H1 (cell line): ENCODE measurements at regions of chr15 and their contacts with region 1.

Region 1: DNA sequence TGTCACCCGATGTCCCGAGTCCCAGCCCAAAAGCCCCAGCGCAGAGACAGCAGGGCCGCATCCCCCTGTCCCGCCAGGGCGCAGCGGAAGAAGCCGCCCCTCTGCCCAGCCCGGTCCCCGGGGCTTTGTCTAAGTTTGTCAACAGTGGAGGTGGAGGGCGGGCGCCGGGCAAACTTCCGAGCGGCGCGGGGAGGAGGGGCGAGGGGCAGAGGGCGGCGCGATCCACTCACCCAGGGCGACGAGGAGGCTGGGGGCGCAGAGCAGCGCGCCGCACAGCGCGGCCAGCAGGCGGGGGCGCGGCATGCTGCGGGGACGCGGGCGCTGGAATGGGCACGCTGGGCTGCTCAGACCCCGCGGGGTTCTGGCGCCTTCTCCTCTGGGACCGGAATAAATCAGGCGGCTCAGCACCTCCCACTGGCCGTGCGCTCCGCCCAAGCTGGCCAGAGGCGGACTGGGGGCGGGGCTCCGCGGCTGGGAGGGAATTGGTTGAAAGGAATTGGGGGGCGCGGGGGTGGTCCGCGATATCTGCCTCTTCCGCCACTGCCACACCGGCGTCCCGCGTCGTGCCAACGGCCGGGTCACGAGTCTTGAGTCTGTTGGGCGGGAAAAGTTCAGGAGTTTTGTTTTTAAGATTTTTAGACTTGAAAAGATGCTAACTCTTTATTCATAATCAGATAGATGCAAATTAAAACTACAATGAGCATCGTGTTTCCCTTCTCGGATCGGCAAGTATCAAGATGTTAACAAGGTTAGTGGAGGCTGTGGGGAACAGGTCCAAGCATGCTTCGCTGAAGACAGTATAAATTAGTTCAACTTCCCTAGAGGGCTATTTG is at the start of gene MFGE8:
- DNase-seq: peak; percentile 71 to 96
- H3K4me3 ChIP-seq: peak within 1 kb of the TSS; percentile 74 to 90 (median 84)
- H3K27ac ChIP-seq: peak within 1 kb of the TSS; percentile 22; the same call in 1 of the 2 replicates
- H3K4me1 ChIP-seq: peaks cover 2 to 26% (median 23%) of the 10 kb centered on the region in 4 experiments
- H3K27me3 ChIP-seq: no peaks in the 10 kb centered on the region; a peak in 1 of 7 replicates
- CTCF ChIP-seq: peak; percentile 5 to 21 (median 13); a peak in 3 of 4 replicates
- EP300 ChIP-seq: 0 out of 3 replicates have a peak, but pooled peaks of 1 of the 2 experiments have one; percentile 12
- POLR2A ChIP-seq: peak; percentile 78 to 93
- RAD21 ChIP-seq: peak; percentile 27 to 48; a peak in 3 of 4 replicates
- total RNA-seq, gene MFGE8: 1,211 and 1,237 TPM in 2 replicates

Region 2: GRCh38 chr15:88756921-88757320 is 156.3 kb before region 1 on chr15:
- CTCF ChIA-PET with region 1: no interaction called
- POLR2A ChIA-PET with region 1: no interaction called
- DNase-seq: no peak
- H3K4me3 ChIP-seq: no peak overlapping the region
- H3K27ac ChIP-seq: no peak overlapping the region
- H3K4me1 ChIP-seq: no peaks in the 10 kb centered on the region
- H3K27me3 ChIP-seq: no peaks in the 10 kb centered on the region; a peak in 1 of 7 replicates
- CTCF ChIP-seq: no peak
- EP300 ChIP-seq: no peak
- POLR2A ChIP-seq: no peak
- RAD21 ChIP-seq: no peak

Region 3: DNA sequence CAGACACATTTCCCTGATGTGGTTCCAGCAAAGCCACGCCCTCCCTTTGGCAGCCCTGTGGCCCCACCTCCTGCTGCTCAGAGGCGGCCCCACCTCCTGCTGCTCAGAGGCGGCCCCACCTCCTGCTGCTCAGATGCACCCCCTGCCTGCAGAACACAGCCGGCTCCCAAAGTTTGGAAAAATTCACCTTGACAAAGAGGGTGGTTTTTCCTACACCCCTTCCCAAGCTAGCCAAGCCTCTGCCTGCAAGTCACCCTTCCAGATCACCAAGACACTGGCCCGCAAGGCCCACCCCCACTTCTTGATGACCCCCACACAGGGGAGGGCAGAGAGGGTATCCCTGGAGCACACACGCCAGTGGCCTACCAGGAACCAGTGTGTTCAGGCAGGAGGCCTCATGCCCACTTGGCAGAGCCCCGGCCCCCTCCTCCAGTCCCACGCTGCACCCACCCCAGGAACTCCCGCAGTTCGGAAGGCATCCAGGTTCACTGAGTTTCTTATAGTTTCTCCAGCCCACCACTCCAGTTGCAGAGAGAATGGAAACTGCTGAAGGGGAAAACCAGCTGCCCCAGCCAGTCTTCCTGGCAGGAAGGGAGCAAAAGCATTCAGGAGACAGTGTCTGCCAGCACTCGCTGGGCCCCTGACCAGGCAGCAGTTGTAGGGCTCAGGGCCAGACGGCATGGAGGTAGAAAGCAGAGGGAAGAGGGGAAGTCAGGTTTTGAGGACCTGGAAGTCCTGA is 15.6 kb before region 1 on chr15:
- CTCF ChIA-PET with region 1: interaction called, 30 read pairs
- POLR2A ChIA-PET with region 1: interaction called, 361 read pairs
- DNase-seq: peak in 1 of 2 experiments; percentile 63
- H3K4me3 ChIP-seq: no peak overlapping the region; a peak in 2 of 8 replicates
- H3K27ac ChIP-seq: no peak overlapping the region
- H3K4me1 ChIP-seq: peaks cover 0 to 37% (median 22%) of the 10 kb centered on the region in 4 experiments; a peak in 6 of 7 replicates
- H3K27me3 ChIP-seq: no peaks in the 10 kb centered on the region
- CTCF ChIP-seq: peak in 1 of 3 experiments; percentile 12; a peak in 1 of 4 replicates
- EP300 ChIP-seq: no peak
- POLR2A ChIP-seq: peak in 1 of 2 experiments; percentile 60; a peak in 1 of 3 replicates
- RAD21 ChIP-seq: no peak

Region 4: DNA sequence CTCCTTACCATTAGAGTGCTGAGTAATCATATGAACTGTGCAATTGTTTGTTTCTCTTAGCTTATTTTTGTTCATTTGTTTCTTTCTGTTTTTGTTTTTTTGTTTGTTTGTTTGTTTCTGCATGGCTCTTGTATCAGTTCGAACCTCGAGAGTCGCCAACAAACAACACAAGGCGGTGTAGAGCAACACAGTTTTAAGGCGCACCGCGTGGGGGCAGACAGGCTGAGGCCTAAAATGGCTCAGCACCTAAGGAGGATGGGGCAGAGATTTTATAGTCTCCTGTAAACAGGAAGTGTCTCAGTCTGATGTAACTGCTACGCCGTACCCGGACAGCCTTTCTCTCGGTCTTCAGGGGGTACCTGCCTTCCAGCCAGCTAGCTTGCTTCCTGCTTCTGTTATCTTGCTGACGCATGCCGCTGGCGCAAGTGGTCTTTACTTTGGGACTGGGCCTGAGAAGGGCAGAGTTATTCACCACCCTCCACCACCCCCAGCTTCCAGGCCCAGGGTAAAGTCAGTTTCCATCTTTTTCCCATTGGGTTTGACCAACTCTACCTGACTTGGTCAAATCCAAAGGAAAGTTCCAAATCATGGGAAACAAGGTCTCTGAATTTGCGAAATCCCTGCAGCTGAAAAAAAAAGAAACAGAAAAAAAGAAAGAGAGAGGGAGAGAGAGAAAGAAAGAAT is 25.7 kb after region 1 on chr15:
- CTCF ChIA-PET with region 1: interaction called, 4 read pairs
- POLR2A ChIA-PET with region 1: interaction called, 12 read pairs
- DNase-seq: peak in 1 of 2 experiments; percentile 52
- H3K4me3 ChIP-seq: no peak overlapping the region
- H3K27ac ChIP-seq: no peak overlapping the region
- H3K4me1 ChIP-seq: peaks cover 0 to 7% (median 2%) of the 10 kb centered on the region in 4 experiments; a peak in 4 of 7 replicates
- H3K27me3 ChIP-seq: no peaks in the 10 kb centered on the region
- CTCF ChIP-seq: no peak
- EP300 ChIP-seq: no peak
- POLR2A ChIP-seq: no peak
- RAD21 ChIP-seq: peak; percentile 5 to 45; a peak in 2 of 4 replicates

Region 5: GRCh38 chr15:88974392-88974791 is 61.2 kb after region 1 on chr15:
- CTCF ChIA-PET with region 1: interaction called, 5 read pairs
- POLR2A ChIA-PET with region 1: interaction called, 10 read pairs
- DNase-seq: no peak
- H3K4me3 ChIP-seq: no peak overlapping the region
- H3K27ac ChIP-seq: no peak overlapping the region
- H3K4me1 ChIP-seq: peaks cover 0 to 4% (median 3%) of the 10 kb centered on the region in 4 experiments; a peak in 5 of 7 replicates
- H3K27me3 ChIP-seq: no peaks in the 10 kb centered on the region
- CTCF ChIP-seq: no peak
- EP300 ChIP-seq: no peak
- POLR2A ChIP-seq: no peak
- RAD21 ChIP-seq: no peak

Region 6: DNA sequence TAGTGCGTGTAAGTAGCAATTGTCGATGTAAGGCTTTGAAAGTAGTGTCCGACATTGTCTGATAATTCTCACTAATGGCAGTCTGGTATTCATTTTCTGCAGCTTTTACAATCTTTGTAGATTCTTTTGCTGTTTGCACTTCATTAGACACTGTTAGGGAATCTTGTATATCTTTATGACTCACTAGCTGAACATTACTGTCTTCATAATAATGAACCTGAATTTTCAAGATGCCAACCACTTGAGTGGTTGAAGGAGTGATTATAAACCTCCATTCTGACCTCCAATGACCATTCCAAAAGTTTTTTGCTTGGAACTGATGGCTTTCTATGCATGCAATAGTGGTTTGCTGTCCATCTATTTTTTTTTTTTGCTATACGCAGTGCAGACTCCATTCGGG is 76.3 kb after region 1 on chr15:
- CTCF ChIA-PET with region 1: interaction called, 7 read pairs
- POLR2A ChIA-PET with region 1: interaction called, 607 read pairs
- DNase-seq: no peak
- H3K4me3 ChIP-seq: no peak overlapping the region
- H3K27ac ChIP-seq: no peak overlapping the region
- H3K4me1 ChIP-seq: peaks cover 17 to 43% (median 38%) of the 10 kb centered on the region in 4 experiments
- H3K27me3 ChIP-seq: no peaks in the 10 kb centered on the region
- CTCF ChIP-seq: no peak
- EP300 ChIP-seq: no peak
- POLR2A ChIP-seq: no peak
- RAD21 ChIP-seq: no peak

Region 7: DNA sequence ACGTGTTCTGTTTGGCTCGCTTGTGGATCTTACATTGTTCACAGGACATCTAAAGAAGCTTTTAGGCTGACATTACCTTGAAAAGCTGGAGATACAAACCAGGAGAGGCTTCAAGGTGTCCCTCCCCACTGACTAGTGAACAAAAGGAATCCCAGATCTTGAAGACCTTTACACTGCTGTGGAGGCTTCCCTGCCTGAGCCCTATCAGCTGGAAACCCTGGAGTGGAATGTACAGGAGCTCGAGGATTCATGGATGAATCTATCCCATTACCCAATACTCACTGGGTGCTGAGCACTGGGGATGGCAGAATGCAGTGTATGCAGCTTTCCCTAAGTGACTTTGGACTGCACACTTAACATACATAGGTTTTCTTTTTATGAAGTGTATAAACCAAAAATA is 82.2 kb after region 1 on chr15:
- CTCF ChIA-PET with region 1: interaction called, 13 read pairs
- POLR2A ChIA-PET with region 1: interaction called, 607 read pairs
- DNase-seq: no peak
- H3K4me3 ChIP-seq: peak overlapping the region in 1 of 4 experiments; percentile 29; a peak in 1 of 8 replicates
- H3K27ac ChIP-seq: 0 out of 2 replicates have a peak overlapping the region, but pooled peaks have one; percentile 39
- H3K4me1 ChIP-seq: peaks cover 16 to 55% (median 44%) of the 10 kb centered on the region in 4 experiments
- H3K27me3 ChIP-seq: no peaks in the 10 kb centered on the region
- CTCF ChIP-seq: no peak
- EP300 ChIP-seq: no peak
- POLR2A ChIP-seq: peak; percentile 21 to 57; a peak in 2 of 3 replicates
- RAD21 ChIP-seq: peak in 1 of 2 experiments; percentile 13; a peak in 1 of 4 replicates

Region 8: DNA sequence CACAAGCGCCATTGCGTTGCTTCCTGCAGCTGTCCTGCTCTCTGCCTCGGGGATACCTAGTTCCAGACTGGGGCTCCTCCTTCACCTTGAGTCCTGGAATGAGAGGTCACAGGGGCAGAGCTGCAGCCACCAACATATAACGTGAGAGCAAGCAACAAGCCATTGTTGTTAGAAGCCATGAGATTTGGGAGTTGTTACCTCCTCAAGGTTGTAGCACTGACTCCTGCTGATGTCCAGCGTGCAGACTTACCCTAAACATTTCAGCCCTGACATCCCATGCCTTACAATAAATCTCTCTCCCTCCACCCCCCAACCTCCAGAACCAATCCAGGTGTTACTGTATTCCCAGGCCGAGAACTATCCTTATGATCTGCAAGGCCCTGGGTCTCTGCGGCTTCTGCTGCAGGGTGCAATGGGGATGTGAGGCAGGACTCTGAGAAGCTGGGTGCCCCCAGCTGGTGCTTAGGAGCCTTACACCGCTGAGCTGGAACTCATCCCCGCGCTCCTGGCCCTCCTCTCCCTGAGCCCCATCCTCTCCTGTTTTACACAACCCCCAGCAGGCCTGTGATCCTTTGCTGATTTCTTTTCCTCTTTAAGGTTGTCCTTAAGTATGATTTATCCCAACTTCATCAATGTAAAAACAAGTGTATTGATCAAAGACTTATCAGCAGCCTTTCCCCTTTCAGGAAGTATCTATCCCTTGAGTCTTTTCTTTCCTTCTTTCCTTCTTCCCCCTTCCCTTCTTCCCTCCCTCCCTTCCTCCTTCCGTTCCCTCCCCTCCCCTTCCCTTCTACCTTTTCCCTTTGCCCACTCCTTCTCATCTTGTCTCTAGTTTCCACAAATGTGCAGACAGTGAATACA is 90.9 kb after region 1 on chr15:
- CTCF ChIA-PET with region 1: interaction called, 15 read pairs
- POLR2A ChIA-PET with region 1: interaction called, 607 read pairs
- DNase-seq: no peak
- H3K4me3 ChIP-seq: no peak overlapping the region
- H3K27ac ChIP-seq: no peak overlapping the region; the same call in 1 of the 2 replicates
- H3K4me1 ChIP-seq: peaks cover 16 to 35% (median 20%) of the 10 kb centered on the region in 4 experiments
- H3K27me3 ChIP-seq: no peaks in the 10 kb centered on the region
- CTCF ChIP-seq: peak; percentile 71 to 79 (median 74)
- EP300 ChIP-seq: no peak
- POLR2A ChIP-seq: no peak
- RAD21 ChIP-seq: peak; percentile 82 to 87